ENCODE measurements at regions of chr4 and their contacts with region 1.

Region 1: DNA sequence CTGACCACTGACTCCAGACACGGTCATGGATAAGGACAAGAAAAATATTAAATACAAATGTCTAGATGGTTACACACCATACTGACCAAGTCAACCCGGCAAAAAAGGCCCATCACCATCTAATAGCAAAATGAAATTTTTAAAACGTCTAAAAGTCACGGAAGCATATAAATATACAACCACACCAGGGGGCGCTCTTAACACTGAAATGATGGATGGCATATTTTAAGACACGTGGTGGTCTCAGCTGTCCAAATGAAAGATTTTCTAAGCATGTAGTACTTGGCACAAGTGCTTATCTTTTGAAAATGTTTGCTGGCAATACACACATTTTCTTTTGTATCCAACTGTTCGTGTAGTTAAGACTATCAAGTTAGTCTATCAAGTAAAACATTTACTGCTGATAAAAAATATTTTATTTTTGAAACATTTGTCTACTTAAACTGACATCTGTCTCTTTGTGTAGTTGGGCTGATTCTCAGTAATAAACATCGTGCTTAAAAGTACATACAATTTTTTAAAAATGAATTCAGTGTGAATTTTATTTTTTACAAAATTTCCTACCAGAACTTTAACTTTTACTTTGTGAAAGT is 64.6 kb downstream of the COX7B2 start:
- DNase-seq: no peak
- H3K4me3 ChIP-seq: no peak overlapping the region
- H3K27ac ChIP-seq: no peak overlapping the region
- H3K4me1 ChIP-seq: peaks cover 0 to 5% (median 0%) of the 10 kb centered on the region in 4 donors
- H3K27me3 ChIP-seq: no peaks in the 10 kb centered on the region
- CTCF ChIP-seq: peak; percentile 17 to 55 (median 53)
- EP300 ChIP-seq: no peak
- POLR2A ChIP-seq: no peak

Region 2: GRCh38 chr4:46730075-46730474 is 114.3 kb before region 1 on chr4:
- intact Hi-C with region 1: no loop called
- DNase-seq: no peak
- H3K4me3 ChIP-seq: no peak overlapping the region
- H3K27ac ChIP-seq: no peak overlapping the region
- H3K4me1 ChIP-seq: no peaks in the 10 kb centered on the region
- H3K27me3 ChIP-seq: peaks cover 0 to 5% (median 2%) of the 10 kb centered on the region in 4 donors
- CTCF ChIP-seq: no peak
- EP300 ChIP-seq: no peak
- POLR2A ChIP-seq: no peak

Region 3: GRCh38 chr4:47002593-47002992 is 158.2 kb after region 1 on chr4:
- intact Hi-C with region 1: no loop called
- DNase-seq: no peak
- H3K4me3 ChIP-seq: no peak overlapping the region
- H3K27ac ChIP-seq: no peak overlapping the region
- H3K4me1 ChIP-seq: peaks cover 0 to 6% (median 0%) of the 10 kb centered on the region in 4 donors
- H3K27me3 ChIP-seq: no peaks in the 10 kb centered on the region
- CTCF ChIP-seq: no peak
- EP300 ChIP-seq: no peak
- POLR2A ChIP-seq: no peak

Region 4: DNA sequence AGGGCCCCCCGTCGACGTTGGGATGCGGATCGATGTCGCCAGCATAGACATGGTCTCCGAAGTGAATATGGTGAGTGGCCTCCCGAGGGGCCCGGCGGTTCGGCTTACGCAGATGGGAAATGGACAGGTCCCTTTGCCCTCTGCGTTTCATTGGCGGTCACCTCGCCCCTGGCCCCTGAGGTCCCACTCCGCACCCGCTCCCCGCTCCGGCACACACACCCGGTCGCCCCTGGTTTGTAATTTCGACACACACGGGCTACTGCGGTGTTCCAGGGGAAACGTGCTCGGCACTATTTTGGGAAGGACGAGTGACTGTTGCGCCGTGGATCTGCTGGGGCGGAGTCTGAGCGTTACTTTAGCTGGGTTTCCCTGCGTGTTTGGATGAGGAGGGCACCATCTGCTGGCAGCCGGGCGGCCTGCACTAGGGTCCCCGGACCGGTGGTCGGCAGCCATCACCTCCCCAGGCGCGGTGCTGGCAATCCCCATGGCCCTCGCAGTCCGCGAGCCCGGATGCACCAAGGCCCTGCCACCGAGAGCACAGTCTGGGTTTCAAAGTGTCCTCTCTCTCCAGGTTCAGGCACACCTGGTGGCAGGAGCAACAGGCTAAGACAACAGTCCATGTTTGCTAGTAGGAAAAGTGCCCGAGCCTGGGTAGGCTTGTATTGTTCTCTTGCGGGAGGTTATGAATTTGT is 188.1 kb after region 1 on chr4:
- intact Hi-C with region 1: loop called (anchors 10 kb)
- DNase-seq: no peak
- H3K4me3 ChIP-seq: peak overlapping the region; percentile 42 to 52 (median 47)
- H3K27ac ChIP-seq: no peak overlapping the region
- H3K4me1 ChIP-seq: peaks cover 4 to 20% (median 17%) of the 10 kb centered on the region in 4 donors
- H3K27me3 ChIP-seq: peaks cover 0 to 29% (median 8%) of the 10 kb centered on the region in 4 donors
- CTCF ChIP-seq: peak; percentile 9 to 50 (median 18)
- EP300 ChIP-seq: no peak
- POLR2A ChIP-seq: no peak

Region 5: DNA sequence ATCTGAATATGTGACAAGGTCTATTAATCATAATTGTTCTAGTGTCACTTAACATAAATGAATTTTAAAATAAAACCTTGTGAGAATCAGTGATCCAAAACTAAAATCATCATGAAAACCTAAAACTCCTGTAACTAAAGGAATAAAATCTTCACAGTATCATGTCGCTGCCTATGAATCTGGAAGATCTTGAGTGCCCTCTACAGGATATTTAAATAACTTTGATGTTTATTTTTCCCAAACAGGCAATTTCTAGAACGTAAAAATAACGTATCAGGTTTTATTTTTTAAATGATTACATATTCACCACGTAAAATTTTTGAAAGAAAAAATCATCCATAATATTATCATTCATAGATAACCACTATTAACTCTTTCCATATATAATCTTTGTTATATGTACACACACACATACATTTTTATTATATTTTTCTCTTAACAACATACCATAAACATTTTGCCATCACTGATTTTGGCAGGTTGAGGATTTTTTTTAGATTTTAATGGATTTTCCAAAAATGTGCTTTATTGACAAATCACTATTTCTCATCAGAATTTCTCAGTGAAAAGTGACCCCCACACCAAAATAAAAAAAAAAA is 539.5 kb after region 1 on chr4:
- intact Hi-C with region 1: loop called (anchors 5 kb)
- DNase-seq: no peak
- H3K4me3 ChIP-seq: no peak overlapping the region
- H3K27ac ChIP-seq: no peak overlapping the region
- H3K4me1 ChIP-seq: no peaks in the 10 kb centered on the region
- H3K27me3 ChIP-seq: no peaks in the 10 kb centered on the region
- CTCF ChIP-seq: peak; percentile 20 to 57 (median 38)
- EP300 ChIP-seq: no peak
- POLR2A ChIP-seq: no peak

Measured in esophagus muscularis mucosa (tissue), 4 donors.